Heart left ventricle (tissue), 16 donors: ENCODE measurements at regions of chr19 and their contacts with region 1.

Region 1: GRCh38 chr19:12610540-12611360 is at the starts of genes ZNF490 and ZNF791:
- DNase-seq: peak; percentile 97 to 99 (median 99)
- ATAC-seq: peak; percentile 99
- H3K4me3 ChIP-seq: peak within 1 kb of the TSS; percentile 77 to 99 (median 90)
- H3K27ac ChIP-seq: peak within 1 kb of the TSS; percentile 82 to 99 (median 98)
- H3K4me1 ChIP-seq: peaks cover 0 to 53% (median 29%) of the 10 kb centered on the region in 12 donors
- H3K27me3 ChIP-seq: no peaks in the 10 kb centered on the region
- CTCF ChIP-seq: peak in 2 of 12 donors; percentile 17 to 22
- POLR2A ChIP-seq: peak; percentile 81 to 83
- total RNA-seq, gene ZNF490: 3.7 to 8.9 (median 5.3) TPM
- total RNA-seq, gene ZNF791: 9.4 to 22.6 (median 14.3) TPM

Region 2: DNA sequence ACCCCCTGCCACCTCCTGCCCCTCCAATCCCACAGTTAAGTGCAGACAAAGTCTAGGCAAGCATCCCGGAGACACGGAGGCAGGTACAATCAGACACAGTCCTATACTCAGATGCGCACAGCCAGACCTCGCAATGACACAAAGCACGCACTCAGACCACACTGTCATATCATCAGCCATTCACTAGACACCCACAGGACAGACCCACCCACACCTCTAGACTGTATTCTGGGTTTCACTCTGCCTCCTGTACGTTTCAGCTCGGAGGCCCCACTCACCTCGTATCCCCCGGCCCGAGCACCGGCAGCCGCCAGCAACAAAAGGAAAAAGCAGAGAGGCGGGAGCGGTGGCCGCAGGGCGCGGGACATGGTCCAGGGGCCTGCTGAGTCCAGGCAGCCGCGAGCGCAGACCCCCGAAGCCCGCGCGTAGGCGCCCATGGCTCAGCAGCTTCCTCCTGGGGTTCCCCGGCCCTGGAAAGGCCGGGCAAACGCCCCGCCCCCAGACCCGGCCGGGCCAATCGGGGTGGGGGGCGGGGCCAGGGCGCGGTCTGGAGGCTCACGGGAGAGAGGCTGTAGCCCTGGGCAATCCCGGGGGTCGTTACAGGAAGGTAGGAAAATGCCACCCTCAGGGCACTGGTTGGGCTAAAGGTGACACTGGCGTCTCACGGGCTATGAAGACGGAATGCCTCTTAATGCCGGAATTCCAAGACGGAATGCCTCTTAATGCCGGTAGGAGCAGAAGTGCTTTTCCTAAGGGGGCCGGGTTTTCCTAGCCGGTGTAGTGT is 55.7 kb after region 1 on chr19 and contains the starts of genes MAN2B1 and WDR83:
- intact Hi-C with region 1: loop called in 1 of 10 experiments (anchors 5 kb)
- DNase-seq: peak; percentile 77 to 88 (median 82)
- ATAC-seq: peak; percentile 60 to 89 (median 88)
- H3K4me3 ChIP-seq: peak within 1 kb of the TSS; percentile 55 to 97 (median 88)
- H3K27ac ChIP-seq: peak within 1 kb of the TSS in 11 of 12 donors; percentile 45 to 90 (median 77)
- H3K4me1 ChIP-seq: peaks cover 9 to 51% (median 38%) of the 10 kb centered on the region in 12 donors
- H3K27me3 ChIP-seq: no peaks in the 10 kb centered on the region
- CTCF ChIP-seq: no peak
- POLR2A ChIP-seq: peak in 1 of 2 donors; percentile 45
- total RNA-seq, gene MAN2B1: 16.0 to 135 (median 30.7) TPM
- total RNA-seq, gene WDR83: 6.0 to 9.2 (median 7.8) TPM